Endothelial cell of umbilical vein (primary cell): ENCODE measurements at regions of chr14 and their contacts with region 1.

Region 1: DNA sequence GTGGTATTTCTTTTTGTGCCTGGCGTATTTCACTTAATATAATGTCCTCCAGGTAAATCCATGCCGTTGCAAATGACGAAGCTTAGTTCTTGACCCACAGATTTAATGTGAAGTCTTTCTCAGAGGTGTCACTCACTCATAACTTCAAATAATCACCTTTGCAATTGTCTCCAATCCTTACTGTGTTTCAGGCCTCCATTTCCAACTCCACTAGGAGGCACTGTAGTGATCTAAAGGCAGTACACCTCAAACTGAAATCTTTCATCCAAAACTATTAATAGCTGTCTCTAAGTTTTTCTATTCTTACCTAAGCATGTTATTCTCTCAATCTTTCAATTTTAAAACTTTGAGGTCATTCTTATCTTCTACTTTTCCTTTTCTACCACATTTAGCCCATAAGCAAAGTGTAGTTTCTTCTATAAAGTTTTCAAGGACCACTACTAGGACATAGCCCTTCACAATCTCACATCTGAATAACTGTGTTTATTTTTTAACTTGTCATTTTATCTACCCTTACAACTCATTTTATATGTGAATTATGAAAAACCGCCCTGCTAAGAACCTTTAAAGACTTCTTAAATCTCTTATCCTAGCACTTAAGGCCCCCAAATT is 25.5 kb upstream of the FBXO34 start:
- DNase-seq: peak; percentile 49
- H3K4me3 ChIP-seq: no peak overlapping the region
- H3K27ac ChIP-seq: no peak overlapping the region
- H3K4me1 ChIP-seq: no peaks in the 10 kb centered on the region
- H3K27me3 ChIP-seq: peaks cover 23 to 33% of the 10 kb centered on the region in 2 experiments
- CTCF ChIP-seq: peak; percentile 52 to 64
- POLR2A ChIP-seq: no peak

Region 2: DNA sequence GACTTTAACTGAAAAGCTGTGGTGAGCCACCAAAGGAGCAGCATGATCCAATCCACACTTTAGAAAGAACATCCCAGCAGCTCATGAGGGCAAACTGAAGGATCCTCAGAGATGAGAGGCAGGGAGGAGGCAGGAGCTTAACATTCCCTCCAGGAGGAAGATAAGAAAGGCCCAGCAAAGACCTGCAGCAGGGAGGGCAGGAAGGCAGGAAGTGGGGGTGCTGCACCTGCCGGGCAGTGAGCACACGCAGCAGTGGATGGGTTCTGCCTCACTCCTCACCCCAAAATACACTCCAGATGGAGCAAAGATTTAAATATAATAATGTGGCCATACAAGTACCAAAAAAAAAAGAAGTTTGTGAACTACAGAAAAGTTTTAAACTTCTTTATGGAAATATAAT is 391.6 kb before region 1 on chr14:
- CTCF ChIA-PET with region 1: no interaction called
- POLR2A ChIA-PET with region 1: no interaction called
- dilution Hi-C with region 1: no loop called
- intact Hi-C with region 1: no loop called
- DNase-seq: no peak
- H3K4me3 ChIP-seq: no peak overlapping the region
- H3K27ac ChIP-seq: no peak overlapping the region
- H3K4me1 ChIP-seq: no peaks in the 10 kb centered on the region
- H3K27me3 ChIP-seq: no peaks in the 10 kb centered on the region
- CTCF ChIP-seq: no peak
- POLR2A ChIP-seq: no peak

Region 3: DNA sequence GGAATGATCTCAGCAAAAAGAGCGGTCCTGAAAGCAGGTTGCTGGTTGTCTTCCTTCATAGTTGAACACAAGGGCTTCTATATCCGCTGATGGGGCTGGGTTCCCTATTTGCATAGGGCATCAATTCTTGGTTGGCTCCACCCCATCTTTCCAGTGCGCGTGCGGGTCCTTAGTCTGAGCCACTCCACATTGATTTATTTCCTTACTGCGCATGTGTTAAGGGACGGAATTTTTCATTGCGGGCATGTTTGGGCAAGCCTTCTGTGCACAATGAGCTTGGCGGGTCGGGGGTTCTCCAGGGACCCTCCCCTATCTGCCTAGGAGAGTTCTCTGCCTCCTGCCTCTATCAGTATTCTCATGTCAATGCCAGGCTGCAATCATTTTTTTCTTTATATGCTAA is 33.1 kb before region 1 on chr14:
- CTCF ChIA-PET with region 1: interaction called, 8 read pairs
- POLR2A ChIA-PET with region 1: no interaction called
- dilution Hi-C with region 1: no loop called
- intact Hi-C with region 1: loop called (anchors 1 kb)
- DNase-seq: no peak
- H3K4me3 ChIP-seq: no peak overlapping the region
- H3K27ac ChIP-seq: no peak overlapping the region
- H3K4me1 ChIP-seq: no peaks in the 10 kb centered on the region
- H3K27me3 ChIP-seq: no peaks in the 10 kb centered on the region
- CTCF ChIP-seq: no peak
- POLR2A ChIP-seq: no peak

Region 4: DNA sequence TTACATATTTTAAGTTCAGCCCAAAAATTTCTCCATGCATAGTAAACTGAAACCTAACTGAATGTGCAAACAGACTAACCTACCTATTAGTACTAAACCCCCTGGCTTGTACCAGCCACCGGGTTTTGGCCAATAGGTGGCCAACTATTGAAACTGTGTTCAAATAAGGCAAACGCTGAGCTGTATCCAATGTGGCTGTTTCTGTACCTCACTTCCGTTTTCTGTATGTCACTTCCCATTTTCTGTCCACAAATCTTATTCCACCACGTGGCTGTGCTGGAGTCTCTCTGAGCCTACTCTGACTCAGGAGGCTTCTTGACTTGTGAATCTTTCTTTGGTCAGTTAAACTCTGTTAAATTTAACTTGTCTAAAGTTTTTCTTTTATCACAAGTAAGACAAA is 19.4 kb after region 1 on chr14:
- CTCF ChIA-PET with region 1: interaction called, 13 read pairs
- POLR2A ChIA-PET with region 1: no interaction called
- dilution Hi-C with region 1: no loop called
- intact Hi-C with region 1: loop called (anchors 2 kb)
- DNase-seq: no peak
- H3K4me3 ChIP-seq: no peak overlapping the region
- H3K27ac ChIP-seq: no peak overlapping the region
- H3K4me1 ChIP-seq: no peaks in the 10 kb centered on the region
- H3K27me3 ChIP-seq: peaks cover 0 to 8% of the 10 kb centered on the region in 2 experiments
- CTCF ChIP-seq: no peak
- POLR2A ChIP-seq: no peak

Region 5: DNA sequence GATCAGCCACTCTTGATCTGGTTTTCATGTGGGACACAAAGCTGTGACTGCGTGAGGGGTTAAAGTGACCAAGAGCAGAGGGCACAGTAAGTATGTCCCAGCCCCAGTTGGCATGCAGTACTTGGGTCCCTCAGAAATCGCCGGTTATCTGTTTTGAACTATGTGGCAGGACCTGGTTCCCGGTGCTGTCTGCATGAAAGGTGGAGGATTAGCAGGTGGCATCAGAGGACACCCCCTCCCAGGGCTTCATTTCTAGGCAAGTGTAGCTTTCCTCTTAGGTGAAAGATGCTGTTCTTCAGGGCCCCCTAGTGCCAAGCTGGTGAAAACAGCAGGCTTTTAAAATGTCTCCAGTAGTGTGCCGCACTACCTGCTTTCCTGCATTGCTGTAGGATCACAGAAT is 108.7 kb after region 1 on chr14:
- CTCF ChIA-PET with region 1: interaction called, 46 read pairs
- POLR2A ChIA-PET with region 1: interaction called, 4 read pairs
- dilution Hi-C with region 1: no loop called
- intact Hi-C with region 1: loop called (anchors 1 kb)
- DNase-seq: peak; percentile 43
- H3K4me3 ChIP-seq: no peak overlapping the region
- H3K27ac ChIP-seq: no peak overlapping the region
- H3K4me1 ChIP-seq: no peaks in the 10 kb centered on the region
- H3K27me3 ChIP-seq: no peaks in the 10 kb centered on the region
- CTCF ChIP-seq: peak; percentile 54 to 72
- POLR2A ChIP-seq: no peak